Vagina (tissue), 2 donors: ENCODE measurements at regions of chr1 and their contacts with region 1.

Region 1: DNA sequence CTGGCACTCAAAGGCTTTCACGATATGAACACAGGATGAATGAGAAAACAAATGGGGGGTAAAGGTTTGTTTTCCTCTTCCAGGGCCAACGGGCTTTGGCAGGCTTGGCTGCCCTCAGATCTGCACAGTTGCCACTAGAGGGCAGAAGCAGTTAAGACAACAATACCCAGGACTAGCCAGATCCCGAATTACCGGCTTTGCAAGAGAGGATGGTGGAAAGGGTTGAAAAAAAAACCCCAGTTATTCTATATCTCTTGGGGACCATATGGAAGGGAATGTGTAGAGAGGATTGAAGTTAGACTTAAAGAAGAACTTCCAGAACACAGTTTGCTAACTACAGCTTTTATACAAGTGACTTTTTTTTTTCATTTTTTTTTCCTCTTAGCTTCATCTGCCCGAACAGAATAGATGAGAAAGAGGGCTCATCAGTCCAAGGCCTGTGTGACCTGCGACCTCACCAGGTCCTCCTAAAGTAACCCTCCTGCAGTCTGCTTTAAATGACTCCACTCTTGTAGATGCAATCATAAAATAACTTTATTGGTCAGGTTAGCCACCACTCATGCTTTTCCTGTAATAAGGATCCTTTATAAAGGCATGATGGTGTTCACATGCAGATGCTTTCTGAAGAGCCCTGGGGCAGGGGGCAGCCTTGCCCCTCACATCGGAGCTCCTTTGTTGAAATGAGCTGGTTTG is 10.7 kb downstream of the FMOD start:
- DNase-seq: no peak
- H3K4me3 ChIP-seq: no peak overlapping the region
- H3K27ac ChIP-seq: peak overlapping the region; percentile 24
- H3K4me1 ChIP-seq: peaks cover 22% of the 10 kb centered on the region
- H3K27me3 ChIP-seq: no peaks in the 10 kb centered on the region
- CTCF ChIP-seq: peak; percentile 87 to 94 (median 93)
- POLR2A ChIP-seq: no peak

Region 2: DNA sequence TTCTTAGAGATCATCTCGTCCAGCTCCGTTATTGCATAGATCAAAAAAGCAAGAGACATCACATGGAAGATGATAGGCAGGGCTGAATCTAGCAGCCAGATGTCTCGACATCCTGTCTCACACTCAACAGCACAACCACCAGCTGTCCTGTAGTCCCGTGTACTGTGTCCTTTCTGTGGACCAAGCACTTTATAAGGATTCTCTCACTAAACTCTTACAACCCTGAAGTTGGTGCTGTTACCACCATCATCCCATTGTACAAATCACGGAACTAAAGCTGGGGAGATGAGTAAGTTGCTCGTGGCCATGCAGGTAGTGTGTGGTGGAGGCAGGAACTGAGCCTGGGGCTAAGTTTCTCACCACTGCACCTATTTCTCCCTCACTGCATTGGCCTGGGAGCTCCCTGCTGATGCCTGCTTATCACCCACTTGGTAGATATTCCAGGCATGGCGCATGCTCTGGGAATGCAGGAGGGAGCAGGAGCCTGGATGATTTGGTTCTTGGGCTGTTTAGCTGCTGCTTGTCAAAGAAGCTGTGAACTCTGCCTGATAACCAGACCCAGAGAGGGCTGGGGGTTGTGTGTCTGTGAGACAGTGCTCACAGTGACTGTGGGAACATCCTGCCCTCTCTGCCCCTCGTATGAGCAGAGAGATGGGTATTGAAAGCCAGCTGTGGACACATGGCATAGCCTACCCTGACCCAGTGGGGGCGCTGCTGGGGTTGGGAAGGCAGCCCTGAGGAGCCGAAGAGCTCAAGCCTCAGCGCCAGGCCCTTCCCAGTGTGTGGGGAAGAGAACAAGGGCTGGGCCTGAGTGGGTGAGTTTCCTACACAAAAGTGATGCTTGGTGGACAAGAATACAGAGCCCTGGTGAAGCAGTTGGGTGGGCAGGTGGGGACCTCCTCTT is 300.4 kb before region 1 on chr1:
- intact Hi-C with region 1: loop called (anchors 10 kb)
- DNase-seq: no peak
- H3K4me3 ChIP-seq: no peak overlapping the region
- H3K27ac ChIP-seq: no peak overlapping the region
- H3K4me1 ChIP-seq: peaks cover 11% of the 10 kb centered on the region
- H3K27me3 ChIP-seq: no peaks in the 10 kb centered on the region
- CTCF ChIP-seq: no peak
- POLR2A ChIP-seq: no peak

Region 3: DNA sequence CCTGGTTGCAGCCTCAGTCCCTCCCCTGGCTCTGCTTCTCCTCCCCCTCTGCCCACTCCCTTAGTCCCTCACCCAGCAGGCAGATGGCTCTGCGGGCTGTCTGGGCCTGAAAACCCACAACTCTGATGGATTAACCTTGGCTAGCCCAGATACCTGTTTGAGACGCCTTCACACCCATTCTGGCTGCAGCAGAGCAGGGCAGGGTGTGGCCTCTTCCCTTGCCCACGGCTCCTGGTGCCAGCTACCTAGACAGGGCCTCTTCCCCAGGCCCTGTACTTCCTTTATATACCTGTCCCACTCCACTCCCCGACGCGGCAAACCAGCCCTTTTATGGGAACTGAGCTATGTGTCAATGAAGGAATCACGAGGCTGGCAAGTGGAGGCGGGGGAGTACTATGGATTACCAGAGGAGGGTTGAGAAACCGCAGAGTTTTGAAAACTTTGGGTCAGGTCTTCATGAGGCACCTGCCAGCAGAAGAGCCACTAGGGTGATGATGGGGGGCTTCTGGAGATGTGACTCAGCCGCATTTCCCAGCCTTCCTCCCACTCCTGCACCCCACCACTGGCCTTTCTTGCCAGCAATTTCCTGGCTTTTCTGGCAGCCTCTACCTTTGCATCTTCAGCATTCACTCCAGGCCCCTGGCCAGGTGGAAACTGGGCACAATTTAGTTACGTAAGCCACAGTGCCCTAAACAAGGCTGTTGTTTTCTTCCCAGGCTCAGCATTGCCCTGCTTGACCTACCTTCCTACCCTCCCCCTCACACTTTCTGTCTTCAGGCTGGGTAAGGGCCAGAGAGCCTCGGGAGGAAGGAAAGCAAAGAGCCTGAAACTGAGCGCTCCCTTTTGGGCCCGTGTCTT is 153.6 kb before region 1 on chr1 and contains the start of gene CHI3L1:
- intact Hi-C with region 1: loop called (anchors 5 kb)
- DNase-seq: no peak
- H3K4me3 ChIP-seq: no peak within 1 kb of the TSS
- H3K27ac ChIP-seq: peak within 1 kb of the TSS; percentile 70
- H3K4me1 ChIP-seq: peaks cover 30% of the 10 kb centered on the region
- H3K27me3 ChIP-seq: no peaks in the 10 kb centered on the region
- CTCF ChIP-seq: no peak
- POLR2A ChIP-seq: no peak
- total RNA-seq, gene CHI3L1: 51.3 TPM

Region 4: DNA sequence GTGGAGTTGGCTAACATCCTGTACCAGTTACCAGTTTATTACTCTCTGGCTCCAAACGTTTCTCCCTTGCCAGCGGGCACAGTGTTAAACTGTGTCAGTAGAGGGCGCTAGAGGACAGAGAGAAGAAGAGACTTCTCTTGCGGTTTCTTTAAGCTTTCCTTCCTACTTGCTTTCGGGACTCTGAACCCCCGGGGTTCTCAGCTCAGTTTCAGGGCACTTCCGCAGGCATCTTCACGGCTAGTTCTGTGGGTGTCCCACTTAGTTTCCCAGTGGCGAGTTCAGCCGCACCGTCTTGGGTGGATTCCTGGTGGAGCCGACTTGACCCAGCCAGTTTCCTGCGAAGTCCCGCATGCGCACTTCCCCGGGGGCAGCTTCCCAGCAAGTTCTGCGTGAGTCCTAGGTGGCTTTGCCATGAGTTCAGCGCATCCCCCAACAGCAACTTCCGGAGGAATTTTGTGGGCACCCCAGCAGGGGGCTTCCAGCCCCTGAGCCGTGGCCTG is 72.9 kb before region 1 on chr1:
- intact Hi-C with region 1: no loop called
- DNase-seq: peak in 1 of 2 donors; percentile 88
- H3K4me3 ChIP-seq: peak overlapping the region; percentile 50 to 52
- H3K27ac ChIP-seq: peak overlapping the region; percentile 92
- H3K4me1 ChIP-seq: peaks cover 11% of the 10 kb centered on the region
- H3K27me3 ChIP-seq: no peaks in the 10 kb centered on the region
- CTCF ChIP-seq: peak; percentile 85 to 95 (median 90)
- POLR2A ChIP-seq: no peak

Region 5: GRCh38 chr1:203440771-203441170 is 100.5 kb after region 1 on chr1:
- intact Hi-C with region 1: loop called (anchors 5 kb)
- DNase-seq: no peak
- H3K4me3 ChIP-seq: no peak overlapping the region
- H3K27ac ChIP-seq: peak overlapping the region; percentile 86
- H3K4me1 ChIP-seq: peaks cover 32% of the 10 kb centered on the region
- H3K27me3 ChIP-seq: no peaks in the 10 kb centered on the region
- CTCF ChIP-seq: peak in 2 of 3 experiments; percentile 48
- POLR2A ChIP-seq: no peak

Region 6: GRCh38 chr1:203486618-203487370 is 146.5 kb after region 1 on chr1:
- intact Hi-C with region 1: loop called (anchors 5 kb)
- DNase-seq: no peak
- H3K4me3 ChIP-seq: peak overlapping the region in 1 of 2 donors; percentile 25
- H3K27ac ChIP-seq: peak overlapping the region; percentile 88
- H3K4me1 ChIP-seq: peaks cover 52% of the 10 kb centered on the region
- H3K27me3 ChIP-seq: no peaks in the 10 kb centered on the region
- CTCF ChIP-seq: no peak
- POLR2A ChIP-seq: no peak

Region 7: GRCh38 chr1:203702130-203702577 is 361.9 kb after region 1 on chr1:
- intact Hi-C with region 1: loop called (anchors 10 kb)
- DNase-seq: no peak
- H3K4me3 ChIP-seq: no peak overlapping the region
- H3K27ac ChIP-seq: peak overlapping the region; percentile 27
- H3K4me1 ChIP-seq: no peaks in the 10 kb centered on the region
- H3K27me3 ChIP-seq: no peaks in the 10 kb centered on the region
- CTCF ChIP-seq: peak; percentile 93 to 95 (median 94)
- POLR2A ChIP-seq: no peak